H1 (cell line): ENCODE measurements at regions of chr21 and their contacts with region 1.

Region 1: GRCh38 chr21:32826329-32827167 is 55.0 kb upstream of the PAXBP1 start:
- DNase-seq: no peak
- H3K4me3 ChIP-seq: no peak overlapping the region
- H3K27ac ChIP-seq: no peak overlapping the region
- H3K4me1 ChIP-seq: no peaks in the 10 kb centered on the region
- H3K27me3 ChIP-seq: no peaks in the 10 kb centered on the region
- CTCF ChIP-seq: peak in 2 of 3 experiments; percentile 73; a peak in 3 of 4 replicates
- EP300 ChIP-seq: no peak
- POLR2A ChIP-seq: no peak
- RAD21 ChIP-seq: peak; percentile 82 to 90

Region 2: DNA sequence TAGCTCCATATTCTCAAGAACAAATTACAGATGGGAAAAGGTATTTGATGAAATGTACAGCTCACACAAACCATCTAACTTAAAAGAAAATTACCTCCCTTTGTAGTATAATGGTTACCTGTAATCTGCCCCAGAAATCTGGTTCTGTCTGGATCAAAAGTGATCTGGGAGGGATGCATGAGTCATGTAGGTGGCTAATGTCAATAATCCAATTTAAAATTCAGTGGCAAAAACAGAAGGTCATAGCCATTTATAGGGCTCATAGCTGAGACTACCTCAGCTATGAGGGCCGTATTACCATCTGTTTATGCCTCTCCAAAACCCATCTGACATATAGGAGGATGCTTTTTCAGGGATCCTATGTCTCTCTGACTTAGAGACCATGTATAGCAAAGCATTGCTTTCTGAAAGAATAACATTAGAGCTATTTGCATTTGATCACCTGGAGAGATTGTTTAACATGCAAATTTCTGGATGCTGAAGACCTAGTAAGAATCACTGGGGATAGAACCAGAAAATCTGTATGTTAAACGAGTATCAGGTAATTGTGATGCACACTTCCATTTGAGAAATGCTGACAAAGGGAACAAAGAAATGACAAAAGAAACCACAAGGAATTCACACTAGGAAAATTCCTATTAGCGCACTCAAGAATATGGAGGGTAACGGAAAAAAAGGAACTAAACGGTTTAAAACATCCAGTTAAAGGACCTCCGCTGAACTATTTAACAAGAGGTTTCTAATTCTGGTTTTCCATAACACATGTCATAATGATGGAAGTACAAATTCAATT is 72.5 kb before region 1 on chr21:
- CTCF ChIA-PET with region 1: interaction called, 14 read pairs
- POLR2A ChIA-PET with region 1: no interaction called
- DNase-seq: no peak
- H3K4me3 ChIP-seq: no peak overlapping the region
- H3K27ac ChIP-seq: no peak overlapping the region
- H3K4me1 ChIP-seq: no peaks in the 10 kb centered on the region
- H3K27me3 ChIP-seq: no peaks in the 10 kb centered on the region
- CTCF ChIP-seq: no peak
- EP300 ChIP-seq: no peak
- POLR2A ChIP-seq: no peak
- RAD21 ChIP-seq: no peak

Region 3: DNA sequence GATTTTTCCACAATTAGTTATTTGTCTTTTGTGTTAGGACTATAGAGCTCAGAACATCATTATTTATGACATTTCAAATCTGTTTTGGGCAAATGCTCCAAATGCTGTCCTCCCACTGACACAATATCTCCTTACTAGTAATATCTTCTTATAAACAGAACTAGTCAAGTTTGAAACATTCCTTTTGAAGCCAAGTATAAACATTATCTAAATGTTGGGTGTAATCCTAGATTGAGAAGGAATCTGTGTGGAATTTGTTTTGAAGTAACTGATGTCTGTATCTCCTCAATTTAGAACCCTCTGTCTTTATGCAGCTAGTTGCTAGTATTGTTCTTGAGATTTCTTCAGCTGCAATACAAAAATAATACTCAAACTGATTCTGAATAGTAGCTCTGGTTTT is 26.5 kb before region 1 on chr21:
- CTCF ChIA-PET with region 1: interaction called, 10 read pairs
- POLR2A ChIA-PET with region 1: no interaction called
- DNase-seq: no peak
- H3K4me3 ChIP-seq: no peak overlapping the region
- H3K27ac ChIP-seq: no peak overlapping the region
- H3K4me1 ChIP-seq: no peaks in the 10 kb centered on the region
- H3K27me3 ChIP-seq: no peaks in the 10 kb centered on the region
- CTCF ChIP-seq: no peak
- EP300 ChIP-seq: no peak
- POLR2A ChIP-seq: no peak
- RAD21 ChIP-seq: no peak

Region 4: GRCh38 chr21:32813265-32813903 is 13.2 kb before region 1 on chr21:
- CTCF ChIA-PET with region 1: interaction called, 11 read pairs
- POLR2A ChIA-PET with region 1: no interaction called
- DNase-seq: no peak
- H3K4me3 ChIP-seq: no peak overlapping the region
- H3K27ac ChIP-seq: no peak overlapping the region
- H3K4me1 ChIP-seq: no peaks in the 10 kb centered on the region
- H3K27me3 ChIP-seq: no peaks in the 10 kb centered on the region
- CTCF ChIP-seq: no peak
- EP300 ChIP-seq: no peak
- POLR2A ChIP-seq: no peak
- RAD21 ChIP-seq: no peak